Heart right ventricle (tissue), 16 donors: ENCODE measurements at regions of chr4 and their contacts with region 1.

Region 1: GRCh38 chr4:74874753-74875367 is 58.1 kb upstream of the PARM1 start:
- DNase-seq: peak in 1 of 2 donors; percentile 34
- ATAC-seq: peak; percentile 79 to 90 (median 84)
- H3K4me3 ChIP-seq: no peak overlapping the region
- H3K27ac ChIP-seq: no peak overlapping the region
- H3K4me1 ChIP-seq: peaks cover 0 to 6% (median 0%) of the 10 kb centered on the region in 9 donors
- H3K27me3 ChIP-seq: no peaks in the 10 kb centered on the region
- CTCF ChIP-seq: peak; percentile 61 to 95 (median 88)

Region 2: DNA sequence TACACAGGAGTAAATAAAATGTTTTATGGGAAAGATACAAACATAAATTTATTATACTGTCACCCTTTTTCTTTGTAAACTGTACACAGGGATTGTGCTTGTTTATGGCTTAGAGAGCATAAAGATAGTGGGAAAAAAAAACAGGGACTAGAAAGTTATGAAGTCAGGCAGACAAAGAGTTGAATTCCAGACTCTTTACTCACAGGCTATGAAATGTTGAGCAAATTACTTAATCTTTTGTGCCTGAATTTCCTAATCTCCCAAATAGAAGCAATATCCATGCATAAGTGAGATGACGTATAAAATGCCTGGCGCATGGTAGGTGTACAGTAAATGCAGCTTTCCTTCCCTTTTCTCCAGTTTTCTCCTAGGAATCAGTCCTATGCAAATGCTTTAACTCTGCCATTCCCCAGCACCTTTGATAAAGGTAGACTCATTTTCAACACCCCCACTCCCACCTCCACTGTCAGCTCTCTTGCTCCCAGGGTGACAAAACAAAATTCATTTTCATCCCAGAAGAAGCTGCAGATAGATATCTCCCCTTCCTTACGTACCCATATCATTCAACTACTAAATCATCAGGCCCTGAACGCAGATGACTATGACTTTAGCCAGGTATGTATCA is 36.0 kb before region 1 on chr4:
- intact Hi-C with region 1: no loop called
- DNase-seq: no peak
- ATAC-seq: no peak
- H3K4me3 ChIP-seq: no peak overlapping the region
- H3K27ac ChIP-seq: no peak overlapping the region
- H3K4me1 ChIP-seq: no peaks in the 10 kb centered on the region
- H3K27me3 ChIP-seq: no peaks in the 10 kb centered on the region
- CTCF ChIP-seq: no peak

Region 3: DNA sequence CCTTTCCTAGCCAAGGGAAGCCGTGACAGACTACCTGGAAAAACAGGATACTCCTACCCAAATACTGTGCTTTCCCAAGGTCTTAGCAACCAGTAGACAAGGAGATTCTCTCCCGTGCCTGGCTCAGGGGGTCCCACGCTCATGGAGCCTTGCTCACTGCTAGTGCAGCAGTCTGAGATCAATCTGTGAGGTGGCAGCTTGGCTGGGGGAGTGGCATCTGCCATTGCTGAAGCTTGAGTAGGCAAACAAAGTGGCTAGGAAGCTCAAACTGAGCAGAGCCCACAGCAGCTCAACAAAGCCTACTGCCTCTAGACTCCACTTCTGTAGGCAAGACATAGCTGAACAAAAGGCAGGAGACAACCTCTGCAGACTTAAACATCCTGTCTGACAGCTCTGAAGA is 235.2 kb after region 1 on chr4:
- intact Hi-C with region 1: loop called in 8 of 10 experiments (anchors 5 to 10 kb)
- DNase-seq: no peak
- ATAC-seq: no peak
- H3K4me3 ChIP-seq: no peak overlapping the region
- H3K27ac ChIP-seq: no peak overlapping the region
- H3K4me1 ChIP-seq: no peaks in the 10 kb centered on the region
- H3K27me3 ChIP-seq: no peaks in the 10 kb centered on the region
- CTCF ChIP-seq: no peak

Region 4: DNA sequence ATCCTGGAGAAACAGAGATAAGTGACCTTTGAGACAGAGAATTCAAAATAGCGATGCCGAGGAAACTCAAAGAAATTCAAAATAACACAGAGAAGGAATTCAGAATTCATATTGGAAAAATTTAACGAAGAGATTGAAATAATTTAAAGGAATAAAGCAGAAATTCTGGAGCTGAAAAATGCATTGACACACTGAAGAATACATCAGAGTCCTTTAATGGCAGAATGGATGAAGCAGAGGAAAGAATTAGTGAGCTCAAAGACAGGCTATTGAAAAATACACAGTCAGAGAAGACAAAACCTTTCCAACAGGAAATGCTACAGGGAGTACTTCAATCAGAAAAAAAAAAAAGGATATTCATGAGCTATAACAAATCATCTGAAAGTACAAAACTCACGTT is 243.9 kb after region 1 on chr4:
- intact Hi-C with region 1: loop called in 8 of 10 experiments (anchors 5 to 10 kb)
- DNase-seq: no peak
- ATAC-seq: no peak
- H3K4me3 ChIP-seq: no peak overlapping the region
- H3K27ac ChIP-seq: no peak overlapping the region
- H3K4me1 ChIP-seq: no peaks in the 10 kb centered on the region
- H3K27me3 ChIP-seq: no peaks in the 10 kb centered on the region
- CTCF ChIP-seq: no peak

Region 5: GRCh38 chr4:75289914-75290582 is 415.2 kb after region 1 on chr4:
- intact Hi-C with region 1: loop called in 1 of 10 experiments (anchors 10 kb)
- DNase-seq: no peak
- ATAC-seq: peak in 1 of 8 donors; percentile 33
- H3K4me3 ChIP-seq: no peak overlapping the region
- H3K27ac ChIP-seq: no peak overlapping the region
- H3K4me1 ChIP-seq: no peaks in the 10 kb centered on the region
- H3K27me3 ChIP-seq: no peaks in the 10 kb centered on the region
- CTCF ChIP-seq: peak in 7 of 9 donors; percentile 17 to 42 (median 33)

Region 6: GRCh38 chr4:75490155-75490554 is 615.3 kb after region 1 on chr4:
- intact Hi-C with region 1: loop called in 3 of 10 experiments (anchors 10 kb)
- DNase-seq: no peak
- ATAC-seq: no peak
- H3K4me3 ChIP-seq: no peak overlapping the region
- H3K27ac ChIP-seq: no peak overlapping the region
- H3K4me1 ChIP-seq: peaks cover 0 to 14% (median 4%) of the 10 kb centered on the region in 9 donors
- H3K27me3 ChIP-seq: no peaks in the 10 kb centered on the region
- CTCF ChIP-seq: peak in 6 of 9 donors; percentile 20 to 51 (median 24)

Region 7: DNA sequence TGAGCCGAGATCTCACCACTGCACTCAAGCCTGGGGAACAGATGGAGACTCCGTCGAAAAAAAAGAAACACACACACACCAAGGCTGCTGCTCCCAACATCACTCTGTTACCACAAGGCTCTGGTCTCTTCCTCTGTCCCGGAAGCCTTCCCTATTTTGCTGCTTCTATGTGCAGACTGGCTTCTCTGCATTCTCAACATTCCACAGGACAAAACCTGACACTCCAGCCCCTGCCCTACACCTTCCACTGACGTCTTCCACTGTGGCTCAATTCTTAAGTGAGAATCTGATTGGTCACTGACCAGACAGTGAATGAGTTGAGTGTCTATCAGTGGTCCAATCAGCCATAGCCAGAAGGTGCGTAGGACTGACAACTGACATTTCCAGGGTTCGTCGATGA is 686.9 kb after region 1 on chr4:
- intact Hi-C with region 1: loop called in 1 of 10 experiments (anchors 10 kb)
- DNase-seq: no peak
- ATAC-seq: no peak
- H3K4me3 ChIP-seq: no peak overlapping the region
- H3K27ac ChIP-seq: no peak overlapping the region
- H3K4me1 ChIP-seq: peaks cover 0 to 17% (median 0%) of the 10 kb centered on the region in 9 donors
- H3K27me3 ChIP-seq: peaks cover 0 to 17% (median 5%) of the 10 kb centered on the region in 7 donors
- CTCF ChIP-seq: no peak